ENCODE measurements at regions of chr6 and their contacts with region 1.

Region 1: GRCh38 chr6:6696867-6697531 is 108.5 kb downstream of the LY86 start:
- DNase-seq: peak; percentile 73

Region 2: DNA sequence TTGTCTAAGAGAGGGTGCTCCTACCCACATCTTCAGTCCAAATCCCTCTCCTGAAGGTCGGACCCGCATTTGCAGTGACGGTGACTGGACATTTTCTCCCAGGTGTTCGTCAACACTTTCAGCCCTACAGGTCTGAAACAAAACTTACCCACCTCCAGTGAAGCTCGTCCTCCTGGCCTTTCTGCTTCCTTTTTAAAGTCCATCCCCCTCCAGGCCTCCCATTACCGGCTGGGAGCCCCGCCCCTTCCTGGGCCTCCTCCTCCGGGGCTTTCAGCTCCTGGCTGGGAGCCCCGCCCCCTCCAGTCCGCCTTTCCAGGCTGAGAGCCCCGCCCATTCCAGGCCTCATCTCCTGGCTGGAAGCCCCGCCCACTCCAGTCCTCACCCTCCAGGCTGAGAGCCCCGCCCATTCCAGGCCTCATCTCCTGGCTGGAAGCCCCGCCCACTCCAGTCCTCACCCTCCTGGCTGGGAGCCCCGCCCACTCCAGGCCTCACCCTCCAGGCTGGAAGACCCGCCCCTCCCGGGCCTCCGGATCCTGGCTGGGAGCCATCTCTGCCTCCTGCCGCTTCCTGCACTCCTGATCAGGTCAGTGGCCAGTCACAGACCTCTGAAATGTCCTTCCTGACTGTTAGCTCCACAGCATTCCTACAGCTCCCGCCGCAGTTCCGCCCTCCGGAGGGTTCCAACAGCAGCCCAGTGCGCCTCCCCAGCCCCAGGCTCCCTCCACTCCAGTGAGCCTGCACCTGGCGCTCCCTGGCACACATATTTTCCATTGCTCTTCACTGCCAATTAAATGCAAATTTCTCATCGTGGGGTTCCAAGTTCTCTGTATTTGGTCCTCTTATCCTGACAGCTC is 10.0 kb before region 1 on chr6:
- CTCF ChIA-PET with region 1: interaction called, 23 read pairs
- POLR2A ChIA-PET with region 1: interaction called, 9 read pairs
- DNase-seq: peak; percentile 98

Region 3: DNA sequence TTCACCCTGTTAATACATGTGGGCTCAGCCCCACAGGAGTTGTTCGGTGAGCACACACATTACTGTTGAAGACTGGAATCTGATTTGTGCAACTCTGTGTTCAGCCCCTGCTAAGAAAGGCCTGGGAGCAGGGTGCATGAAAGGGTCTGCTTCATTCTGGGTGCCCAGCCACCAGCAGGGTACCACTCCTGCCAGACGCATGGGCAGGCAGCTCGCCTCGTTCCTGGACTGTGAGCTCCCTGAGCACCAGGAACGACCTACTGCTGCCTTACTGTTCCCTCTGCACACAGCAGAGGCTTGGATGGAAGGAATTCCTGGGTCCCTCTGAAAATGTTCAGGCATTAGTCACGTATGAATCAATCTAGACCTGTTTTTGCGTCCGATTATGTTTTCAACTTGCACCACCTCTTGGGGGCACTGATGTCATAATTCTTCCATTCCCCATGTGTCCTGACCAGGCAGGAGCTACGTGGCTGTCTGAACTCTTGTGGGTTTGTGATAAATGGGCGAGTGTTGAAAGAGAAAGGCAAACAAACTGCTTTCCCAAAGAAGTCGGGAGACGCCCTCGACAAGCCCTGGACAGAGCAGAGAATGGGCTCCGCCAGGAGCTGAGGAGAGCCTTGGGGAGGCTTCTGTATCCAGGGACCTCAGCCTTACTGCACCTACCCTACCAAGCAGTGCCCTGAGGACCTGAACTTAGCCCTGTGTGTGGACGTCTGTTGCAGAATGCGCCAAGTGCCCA is 15.4 kb after region 1 on chr6:
- CTCF ChIA-PET with region 1: interaction called, 15 read pairs
- POLR2A ChIA-PET with region 1: no interaction called
- DNase-seq: no peak